Mammary epithelial cell (primary cell): ENCODE measurements at regions of chr15 and their contacts with region 1.

Region 1: GRCh38 chr15:59349680-59350420 is 22.8 kb downstream of the MYO1E start:
- DNase-seq: peak; percentile 97
- H3K4me3 ChIP-seq: no peak overlapping the region
- H3K27ac ChIP-seq: peak overlapping the region; percentile 99
- H3K4me1 ChIP-seq: peaks cover 59% of the 10 kb centered on the region
- H3K27me3 ChIP-seq: no peaks in the 10 kb centered on the region
- CTCF ChIP-seq: no peak

Region 2: DNA sequence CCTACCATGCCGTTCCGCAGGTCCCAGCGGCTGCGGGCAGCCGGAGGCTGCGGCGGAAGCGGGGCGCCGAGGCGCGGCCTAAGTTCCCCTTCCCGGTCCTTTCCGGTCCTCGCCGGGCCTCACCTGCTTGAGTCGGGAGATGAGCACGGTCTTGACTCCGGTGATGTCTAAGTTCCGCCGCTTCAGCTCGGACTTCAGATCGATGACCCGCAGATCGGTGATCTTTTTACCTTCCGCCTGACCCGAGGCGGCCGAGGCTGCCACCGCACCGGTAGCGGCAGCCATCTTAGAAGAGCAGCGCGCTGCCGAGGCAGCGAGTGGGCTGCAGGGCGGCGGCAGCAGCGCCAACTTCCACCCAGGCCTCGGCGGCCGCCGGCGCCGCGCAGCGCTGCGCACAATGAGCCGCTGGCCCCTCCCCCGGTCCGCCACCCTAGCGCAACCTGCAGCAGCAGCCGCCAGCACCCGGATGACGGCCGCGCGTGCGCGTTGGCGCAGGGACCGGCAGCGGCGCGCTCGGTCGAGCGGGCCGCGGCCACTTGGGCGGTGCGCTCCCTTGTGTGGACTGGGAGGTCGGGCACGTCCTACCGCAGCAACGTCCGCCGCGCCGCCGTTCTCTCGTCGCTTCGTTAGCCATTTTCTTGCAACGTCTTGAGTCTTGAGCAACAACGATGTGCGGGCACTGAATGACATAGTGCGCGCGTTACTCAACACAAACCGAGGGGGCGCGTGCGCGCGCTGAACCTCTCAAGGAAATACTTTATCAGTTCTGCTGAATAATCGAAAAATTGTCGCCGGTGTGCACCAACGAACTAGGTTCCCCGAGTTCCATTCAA is 416.4 kb before region 1 on chr15 and contains the start of gene SLTM:
- CTCF ChIA-PET with region 1: no interaction called
- dilution Hi-C with region 1: no loop called
- in situ Hi-C with region 1: no loop called
- intact Hi-C with region 1: loop called (anchors 5 kb)
- DNase-seq: peak; percentile 96
- H3K4me3 ChIP-seq: peak within 1 kb of the TSS; percentile 73 to 98 (median 80)
- H3K27ac ChIP-seq: peak within 1 kb of the TSS; percentile 76
- H3K4me1 ChIP-seq: peaks cover 7% of the 10 kb centered on the region
- H3K27me3 ChIP-seq: no peaks in the 10 kb centered on the region
- CTCF ChIP-seq: peak in 1 of 2 donors; percentile 19
- total RNA-seq, gene SLTM: 46.5 to 69.1 TPM

Region 3: DNA sequence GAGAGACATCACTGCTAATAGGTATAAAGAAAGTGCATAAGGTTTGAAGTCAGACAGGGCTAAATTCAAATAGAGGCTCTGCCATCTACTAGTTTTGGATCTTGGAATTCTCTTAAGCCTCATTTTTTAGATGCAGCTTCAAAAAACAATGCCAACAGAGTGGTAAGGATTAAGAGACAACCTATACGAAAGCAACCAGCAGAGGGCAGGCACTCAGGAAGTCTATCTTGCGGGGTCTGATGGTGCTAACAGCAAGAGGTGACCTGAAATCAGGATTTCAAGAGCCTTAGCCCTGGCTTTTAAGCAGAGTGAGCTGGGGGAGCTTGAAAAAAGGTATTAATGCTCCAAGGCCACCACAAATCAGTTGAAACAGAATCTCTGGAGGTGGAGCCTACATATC is 102.5 kb before region 1 on chr15:
- CTCF ChIA-PET with region 1: no interaction called
- dilution Hi-C with region 1: no loop called
- in situ Hi-C with region 1: no loop called
- intact Hi-C with region 1: loop called (anchors 5 kb)
- DNase-seq: peak; percentile 35
- H3K4me3 ChIP-seq: no peak overlapping the region
- H3K27ac ChIP-seq: no peak overlapping the region
- H3K4me1 ChIP-seq: no peaks in the 10 kb centered on the region
- H3K27me3 ChIP-seq: no peaks in the 10 kb centered on the region
- CTCF ChIP-seq: peak; percentile 62 to 68

Region 4: GRCh38 chr15:59274126-59274970 is 75.5 kb before region 1 on chr15:
- CTCF ChIA-PET with region 1: no interaction called
- dilution Hi-C with region 1: loop called (anchors 5 kb)
- in situ Hi-C with region 1: no loop called
- intact Hi-C with region 1: no loop called
- DNase-seq: peak; percentile 79
- H3K4me3 ChIP-seq: no peak overlapping the region
- H3K27ac ChIP-seq: peak overlapping the region; percentile 61
- H3K4me1 ChIP-seq: peaks cover 62% of the 10 kb centered on the region
- H3K27me3 ChIP-seq: no peaks in the 10 kb centered on the region
- CTCF ChIP-seq: no peak

Region 5: GRCh38 chr15:59283717-59284336 is 66.0 kb before region 1 on chr15:
- CTCF ChIA-PET with region 1: no interaction called
- dilution Hi-C with region 1: loop called (anchors 5 kb)
- in situ Hi-C with region 1: no loop called
- intact Hi-C with region 1: loop called (anchors 5 kb)
- DNase-seq: peak; percentile 97
- H3K4me3 ChIP-seq: no peak overlapping the region
- H3K27ac ChIP-seq: peak overlapping the region; percentile 97
- H3K4me1 ChIP-seq: peaks cover 53% of the 10 kb centered on the region
- H3K27me3 ChIP-seq: no peaks in the 10 kb centered on the region
- CTCF ChIP-seq: peak in 1 of 2 donors; percentile 1

Region 6: GRCh38 chr15:59299929-59300617 is 49.8 kb before region 1 on chr15:
- CTCF ChIA-PET with region 1: no interaction called
- dilution Hi-C with region 1: no loop called
- in situ Hi-C with region 1: no loop called
- intact Hi-C with region 1: loop called (anchors 5 kb)
- DNase-seq: peak; percentile 97
- H3K4me3 ChIP-seq: no peak overlapping the region
- H3K27ac ChIP-seq: peak overlapping the region; percentile 97
- H3K4me1 ChIP-seq: peaks cover 74% of the 10 kb centered on the region
- H3K27me3 ChIP-seq: no peaks in the 10 kb centered on the region
- CTCF ChIP-seq: no peak

Region 7: DNA sequence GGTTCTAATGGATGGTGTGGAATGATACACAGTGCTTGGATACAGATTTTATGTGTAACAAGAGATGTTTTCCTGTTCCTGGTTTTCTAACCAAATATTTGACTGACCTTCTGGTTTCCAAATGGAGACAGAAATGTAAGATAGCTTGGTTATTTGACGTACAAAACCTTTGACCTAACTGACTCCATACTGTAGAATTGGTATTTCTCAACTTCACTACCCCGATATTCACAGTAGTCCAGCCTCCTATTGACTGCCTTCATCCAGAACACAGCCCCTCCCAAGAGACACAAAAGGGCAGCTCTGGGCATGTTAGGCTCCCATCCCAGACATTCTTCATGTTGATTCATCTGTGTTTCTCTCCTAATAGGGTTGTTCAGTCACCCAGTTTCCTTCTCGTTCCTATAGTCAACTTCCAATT is 10.6 kb before region 1 on chr15:
- CTCF ChIA-PET with region 1: no interaction called
- dilution Hi-C with region 1: no loop called
- in situ Hi-C with region 1: no loop called
- intact Hi-C with region 1: loop called (anchors 1 kb)
- DNase-seq: peak; percentile 94
- H3K4me3 ChIP-seq: no peak overlapping the region
- H3K27ac ChIP-seq: peak overlapping the region; percentile 90
- H3K4me1 ChIP-seq: peaks cover 33% of the 10 kb centered on the region
- H3K27me3 ChIP-seq: no peaks in the 10 kb centered on the region
- CTCF ChIP-seq: no peak

Region 8: GRCh38 chr15:59473226-59473625 is 123.4 kb after region 1 on chr15:
- CTCF ChIA-PET with region 1: no interaction called
- dilution Hi-C with region 1: no loop called
- in situ Hi-C with region 1: no loop called
- intact Hi-C with region 1: no loop called
- DNase-seq: no peak
- H3K4me3 ChIP-seq: no peak overlapping the region
- H3K27ac ChIP-seq: no peak overlapping the region
- H3K4me1 ChIP-seq: no peaks in the 10 kb centered on the region
- H3K27me3 ChIP-seq: no peaks in the 10 kb centered on the region
- CTCF ChIP-seq: no peak